CD8-positive, alpha-beta T cell (primary cell): ENCODE measurements at regions of chr18 and their contacts with region 1.

Region 1: DNA sequence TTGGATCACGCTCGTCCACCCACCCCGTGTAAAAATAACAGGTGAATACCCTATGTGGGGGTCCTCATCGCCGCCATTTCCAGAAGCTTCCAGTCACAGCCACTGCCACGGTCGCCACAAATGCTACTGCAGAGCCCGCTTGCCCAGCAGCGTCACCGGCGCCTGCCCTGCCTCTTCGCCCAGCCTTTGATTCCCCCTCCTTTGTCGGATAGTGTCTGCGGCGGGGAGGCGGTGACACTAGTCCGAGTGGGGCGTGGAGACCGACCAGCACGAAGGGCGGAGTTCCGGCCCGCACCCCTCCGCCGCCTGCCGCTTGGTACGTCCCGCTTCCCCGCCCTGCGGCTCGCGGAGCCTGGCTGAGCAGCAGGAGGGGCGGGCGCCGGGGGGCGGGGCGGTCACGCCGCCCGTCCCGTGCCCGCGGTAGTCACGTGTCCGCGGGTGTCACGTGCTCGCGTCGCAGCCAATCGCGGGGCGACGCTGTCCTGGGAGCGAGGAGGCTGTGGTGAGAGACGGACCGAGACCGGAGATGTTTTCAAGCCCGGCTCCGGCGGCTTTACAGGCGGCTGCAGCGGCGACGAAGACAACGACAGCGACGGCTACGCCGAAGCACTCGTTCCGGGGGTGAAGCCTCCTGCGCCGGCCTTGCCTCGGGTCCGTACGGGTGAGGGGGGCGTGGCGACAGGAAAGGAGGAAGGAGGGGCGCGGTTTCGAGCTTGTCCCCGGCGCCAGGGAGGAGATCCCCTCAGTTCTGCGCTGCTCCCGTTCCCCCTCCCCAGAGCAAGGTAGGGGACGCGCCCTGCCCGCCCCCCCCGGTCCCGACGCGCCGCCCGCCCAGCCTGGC is at the start of gene ANKRD12:
- DNase-seq: peak; percentile 96 to 99 (median 98)
- ATAC-seq: peak; percentile 65
- H3K4me3 ChIP-seq: peak within 1 kb of the TSS; percentile 87 to 93
- H3K4me3 Mint-ChIP-seq: peak within 1 kb of the TSS; percentile 99
- H3K27ac ChIP-seq: peak within 1 kb of the TSS; percentile 94 to 96
- H3K27ac Mint-ChIP-seq: peak within 1 kb of the TSS; percentile 99
- H3K4me1 ChIP-seq: peaks cover 56% of the 10 kb centered on the region
- H3K4me1 Mint-ChIP-seq: peaks cover 68% of the 10 kb centered on the region
- H3K27me3 ChIP-seq: no peaks in the 10 kb centered on the region
- H3K27me3 Mint-ChIP-seq: no peaks in the 10 kb centered on the region
- CTCF ChIP-seq: no peak
- total RNA-seq, gene ANKRD12: 167 to 177 TPM

Region 2: DNA sequence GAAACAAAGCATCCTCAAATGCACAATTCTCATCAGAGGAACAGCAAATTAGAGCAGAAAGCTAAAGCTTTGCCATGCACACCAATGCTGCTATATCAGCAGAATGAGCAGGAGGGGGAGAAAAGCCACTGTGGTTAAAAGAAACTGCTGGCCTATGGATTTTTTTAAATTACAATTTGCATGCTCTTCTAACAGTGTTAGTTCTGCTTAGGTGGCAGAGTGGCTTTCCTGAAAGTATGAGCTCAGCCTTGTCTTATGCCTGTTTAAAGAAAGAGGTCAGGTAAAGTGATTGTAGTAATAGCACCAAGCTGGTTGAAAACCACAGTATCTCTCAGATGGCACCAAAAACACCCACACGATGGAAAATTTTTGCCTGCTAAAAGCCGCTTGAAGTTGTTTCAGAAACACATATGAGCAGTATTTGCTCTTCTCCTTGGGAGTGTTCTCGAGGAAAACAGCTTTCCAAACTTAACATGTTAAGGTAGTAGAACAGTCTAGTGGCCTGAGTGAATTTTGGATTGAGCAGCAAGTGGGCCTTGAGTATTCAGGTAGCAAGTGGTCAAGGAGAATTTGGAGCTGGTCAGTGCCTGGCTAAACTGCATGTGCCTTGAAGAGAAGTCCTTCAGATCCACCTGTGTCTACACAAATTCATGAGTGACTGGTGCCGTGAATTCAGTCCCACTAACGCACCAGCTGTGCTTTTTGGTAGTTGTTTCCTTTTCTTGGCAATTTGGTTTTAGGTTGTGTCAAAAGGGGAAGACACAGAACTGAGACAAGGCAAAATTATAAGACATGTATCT is 53.6 kb before region 1 on chr18:
- CTCF ChIA-PET with region 1: interaction called, 4 read pairs
- POLR2A ChIA-PET with region 1: interaction called, 11 read pairs
- intact Hi-C with region 1: no loop called
- DNase-seq: peak in 5 of 9 experiments; percentile 16 to 62 (median 46)
- ATAC-seq: peak; percentile 90
- H3K4me3 ChIP-seq: no peak overlapping the region
- H3K4me3 Mint-ChIP-seq: peak overlapping the region; percentile 36
- H3K27ac ChIP-seq: peak overlapping the region; percentile 28 to 66
- H3K27ac Mint-ChIP-seq: peak overlapping the region; percentile 87
- H3K4me1 ChIP-seq: peaks cover 15% of the 10 kb centered on the region
- H3K4me1 Mint-ChIP-seq: peaks cover 23% of the 10 kb centered on the region
- H3K27me3 ChIP-seq: no peaks in the 10 kb centered on the region
- H3K27me3 Mint-ChIP-seq: no peaks in the 10 kb centered on the region
- CTCF ChIP-seq: no peak

Region 3: GRCh38 chr18:9109523-9109922 is 27.0 kb before region 1 on chr18:
- CTCF ChIA-PET with region 1: interaction called, 4 read pairs
- POLR2A ChIA-PET with region 1: interaction called, 83 read pairs
- intact Hi-C with region 1: no loop called
- DNase-seq: no peak
- ATAC-seq: no peak
- H3K4me3 ChIP-seq: no peak overlapping the region
- H3K4me3 Mint-ChIP-seq: peak overlapping the region; percentile 8
- H3K27ac ChIP-seq: peak overlapping the region in 1 of 2 experiments; percentile 7
- H3K27ac Mint-ChIP-seq: peak overlapping the region; percentile 33
- H3K4me1 ChIP-seq: peaks cover 84% of the 10 kb centered on the region
- H3K4me1 Mint-ChIP-seq: peaks cover 91% of the 10 kb centered on the region
- H3K27me3 ChIP-seq: no peaks in the 10 kb centered on the region
- H3K27me3 Mint-ChIP-seq: no peaks in the 10 kb centered on the region
- CTCF ChIP-seq: no peak

Region 4: DNA sequence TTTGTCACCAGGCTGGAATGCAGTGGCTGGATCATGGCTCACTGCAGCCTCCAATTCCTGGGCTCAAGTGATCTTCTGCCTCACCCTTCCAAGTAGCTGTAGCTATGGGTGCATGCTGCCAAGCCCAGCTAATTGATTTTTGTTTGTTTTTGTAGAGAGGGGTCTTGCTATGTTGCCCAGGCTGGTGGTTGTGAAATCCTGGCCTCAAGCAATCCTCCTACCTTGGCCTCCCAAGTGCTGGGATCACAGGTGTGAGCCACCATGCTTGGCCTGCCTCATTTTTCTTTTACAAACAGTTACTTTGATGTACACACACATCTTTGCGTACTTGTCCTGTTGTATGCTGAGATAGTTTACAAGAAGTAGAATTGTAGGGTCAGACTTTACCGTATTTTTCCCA is 13.0 kb before region 1 on chr18:
- CTCF ChIA-PET with region 1: interaction called, 14 read pairs
- POLR2A ChIA-PET with region 1: interaction called, 78 read pairs
- intact Hi-C with region 1: loop called (anchors 1 kb)
- DNase-seq: no peak
- ATAC-seq: no peak
- H3K4me3 ChIP-seq: no peak overlapping the region
- H3K4me3 Mint-ChIP-seq: no peak overlapping the region
- H3K27ac ChIP-seq: no peak overlapping the region
- H3K27ac Mint-ChIP-seq: peak overlapping the region; percentile 41
- H3K4me1 ChIP-seq: peaks cover 47% of the 10 kb centered on the region
- H3K4me1 Mint-ChIP-seq: peaks cover 65% of the 10 kb centered on the region
- H3K27me3 ChIP-seq: no peaks in the 10 kb centered on the region
- H3K27me3 Mint-ChIP-seq: no peaks in the 10 kb centered on the region
- CTCF ChIP-seq: no peak